Caco-2 (cell line): ENCODE measurements at regions of chr18 and their contacts with region 1.

Region 1: GRCh38 chr18:31555971-31556747 is 35.5 kb upstream of the TTR start:
- DNase-seq: peak in 1 of 2 experiments; percentile 48
- H3K4me3 ChIP-seq: no peak overlapping the region
- H3K4me3 Mint-ChIP-seq: peak overlapping the region; percentile 54
- H3K27ac Mint-ChIP-seq: no peak overlapping the region
- H3K4me1 ChIP-seq: peaks cover 9% of the 10 kb centered on the region; the same call in 1 of the 2 replicates
- H3K4me1 Mint-ChIP-seq: peaks cover 12% of the 10 kb centered on the region
- H3K27me3 ChIP-seq: no peaks in the 10 kb centered on the region
- H3K27me3 Mint-ChIP-seq: no peaks in the 10 kb centered on the region
- CTCF ChIP-seq: peak; percentile 34 to 60

Region 2: GRCh38 chr18:30971338-30971956 is 584.7 kb before region 1 on chr18:
- CTCF ChIA-PET with region 1: no interaction called
- POLR2A ChIA-PET with region 1: no interaction called
- intact Hi-C with region 1: loop called (anchors 10 kb)
- DNase-seq: peak in 1 of 2 experiments; percentile 16
- H3K4me3 ChIP-seq: no peak overlapping the region
- H3K4me3 Mint-ChIP-seq: no peak overlapping the region
- H3K27ac Mint-ChIP-seq: no peak overlapping the region
- H3K4me1 ChIP-seq: no peaks in the 10 kb centered on the region
- H3K4me1 Mint-ChIP-seq: no peaks in the 10 kb centered on the region
- H3K27me3 ChIP-seq: no peaks in the 10 kb centered on the region
- H3K27me3 Mint-ChIP-seq: no peaks in the 10 kb centered on the region
- CTCF ChIP-seq: peak; percentile 1 to 41

Region 3: DNA sequence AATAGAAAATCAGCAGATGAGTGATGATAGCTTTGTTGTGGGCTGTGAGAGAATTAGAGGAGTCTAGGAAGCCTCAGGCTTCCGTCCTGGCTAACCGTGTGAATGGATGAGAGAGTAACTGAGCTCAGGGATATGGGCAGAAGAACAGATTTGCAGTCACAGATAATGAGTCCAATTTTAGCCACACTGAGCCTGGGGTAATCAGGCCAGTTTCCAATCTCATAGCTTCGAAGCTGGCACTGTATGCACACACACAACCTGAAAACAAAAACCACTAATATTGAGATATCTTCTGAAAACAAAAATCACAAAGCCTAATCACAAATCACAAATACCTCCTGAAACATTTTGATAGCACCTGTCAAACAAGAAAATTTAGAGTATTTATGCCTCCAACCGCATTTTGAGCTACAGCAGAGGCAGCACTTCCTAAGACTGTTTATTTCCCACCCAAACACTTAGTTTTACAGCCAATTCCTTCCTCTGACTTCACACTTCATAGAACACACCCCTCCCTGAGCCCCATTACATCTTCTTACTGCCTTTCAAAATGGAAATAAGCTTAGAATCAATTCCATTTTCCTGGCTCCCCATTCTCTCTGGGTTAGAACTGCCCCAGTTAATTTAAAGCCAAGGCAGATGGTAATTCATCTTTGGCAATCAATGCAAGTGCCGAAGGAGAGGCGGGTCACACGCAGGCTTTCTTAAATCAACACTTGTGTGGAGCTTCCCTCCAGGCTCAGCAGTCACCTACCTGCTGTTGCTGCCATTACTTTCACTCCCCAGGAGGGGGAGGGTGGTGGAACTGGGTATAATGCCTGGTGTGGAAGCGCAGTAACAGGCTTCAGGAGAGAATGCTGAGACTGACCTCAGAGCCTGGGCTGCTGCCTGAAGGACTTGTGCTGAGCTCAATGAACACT is 54.4 kb after region 1 on chr18:
- CTCF ChIA-PET with region 1: interaction called, 4 read pairs
- POLR2A ChIA-PET with region 1: no interaction called
- intact Hi-C with region 1: loop called (anchors 5 kb)
- DNase-seq: peak; percentile 58 to 61
- H3K4me3 ChIP-seq: no peak overlapping the region
- H3K4me3 Mint-ChIP-seq: peak overlapping the region; percentile 4
- H3K27ac Mint-ChIP-seq: no peak overlapping the region
- H3K4me1 ChIP-seq: no peaks in the 10 kb centered on the region; the same call in 1 of the 2 replicates
- H3K4me1 Mint-ChIP-seq: peaks cover 24% of the 10 kb centered on the region
- H3K27me3 ChIP-seq: no peaks in the 10 kb centered on the region
- H3K27me3 Mint-ChIP-seq: no peaks in the 10 kb centered on the region
- CTCF ChIP-seq: peak in 1 of 2 experiments; percentile 40

Region 4: DNA sequence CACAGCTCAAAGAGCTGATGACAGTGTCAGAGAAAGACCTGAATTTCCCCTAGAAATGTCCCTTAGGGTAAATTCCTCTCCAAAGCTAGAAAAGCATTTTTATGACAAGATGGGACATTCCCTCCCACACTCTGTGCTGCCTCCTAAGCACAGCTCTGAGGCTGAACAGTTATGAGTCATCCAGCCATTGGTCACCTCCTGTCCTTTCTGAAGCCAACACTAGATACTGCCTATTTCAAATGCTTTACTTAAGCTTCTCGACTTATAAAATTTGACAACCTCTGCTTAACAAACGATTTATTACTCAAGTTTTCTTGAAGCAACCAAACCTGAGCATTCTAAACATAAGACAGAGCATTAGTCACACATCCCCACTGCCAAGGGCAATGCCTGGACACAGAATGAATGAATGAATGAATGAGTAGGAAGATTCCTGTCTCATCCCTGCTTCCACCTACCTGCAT is 92.8 kb after region 1 on chr18:
- CTCF ChIA-PET with region 1: interaction called, 3 read pairs
- POLR2A ChIA-PET with region 1: no interaction called
- intact Hi-C with region 1: loop called (anchors 2 kb)
- DNase-seq: peak; percentile 61 to 70
- H3K4me3 ChIP-seq: no peak overlapping the region
- H3K4me3 Mint-ChIP-seq: peak overlapping the region; percentile 37
- H3K27ac Mint-ChIP-seq: peak overlapping the region; percentile 72
- H3K4me1 ChIP-seq: peaks cover 59% of the 10 kb centered on the region
- H3K4me1 Mint-ChIP-seq: peaks cover 48% of the 10 kb centered on the region
- H3K27me3 ChIP-seq: no peaks in the 10 kb centered on the region
- H3K27me3 Mint-ChIP-seq: no peaks in the 10 kb centered on the region
- CTCF ChIP-seq: no peak

Region 5: GRCh38 chr18:31722369-31722957 is 166.3 kb after region 1 on chr18:
- CTCF ChIA-PET with region 1: interaction called, 3 read pairs
- POLR2A ChIA-PET with region 1: no interaction called
- intact Hi-C with region 1: loop called (anchors 1 kb)
- DNase-seq: peak; percentile 54 to 65
- H3K4me3 ChIP-seq: no peak overlapping the region
- H3K4me3 Mint-ChIP-seq: no peak overlapping the region
- H3K27ac Mint-ChIP-seq: no peak overlapping the region
- H3K4me1 ChIP-seq: no peaks in the 10 kb centered on the region
- H3K4me1 Mint-ChIP-seq: no peaks in the 10 kb centered on the region
- H3K27me3 ChIP-seq: no peaks in the 10 kb centered on the region
- H3K27me3 Mint-ChIP-seq: no peaks in the 10 kb centered on the region
- CTCF ChIP-seq: peak; percentile 45 to 49

Region 6: GRCh38 chr18:31819106-31819924 is 263.2 kb after region 1 on chr18:
- CTCF ChIA-PET with region 1: interaction called, 3 read pairs
- POLR2A ChIA-PET with region 1: no interaction called
- intact Hi-C with region 1: loop called (anchors 1 kb)
- DNase-seq: peak in 1 of 2 experiments; percentile 56
- H3K4me3 ChIP-seq: no peak overlapping the region
- H3K4me3 Mint-ChIP-seq: peak overlapping the region; percentile 12
- H3K27ac Mint-ChIP-seq: peak overlapping the region; percentile 54
- H3K4me1 ChIP-seq: peaks cover 12% of the 10 kb centered on the region; the same call in 1 of the 2 replicates
- H3K4me1 Mint-ChIP-seq: peaks cover 7% of the 10 kb centered on the region
- H3K27me3 ChIP-seq: no peaks in the 10 kb centered on the region
- H3K27me3 Mint-ChIP-seq: no peaks in the 10 kb centered on the region
- CTCF ChIP-seq: peak; percentile 32 to 51